Heart right ventricle (tissue), 16 donors: ENCODE measurements at regions of chr4 and their contacts with region 1.

Region 1: DNA sequence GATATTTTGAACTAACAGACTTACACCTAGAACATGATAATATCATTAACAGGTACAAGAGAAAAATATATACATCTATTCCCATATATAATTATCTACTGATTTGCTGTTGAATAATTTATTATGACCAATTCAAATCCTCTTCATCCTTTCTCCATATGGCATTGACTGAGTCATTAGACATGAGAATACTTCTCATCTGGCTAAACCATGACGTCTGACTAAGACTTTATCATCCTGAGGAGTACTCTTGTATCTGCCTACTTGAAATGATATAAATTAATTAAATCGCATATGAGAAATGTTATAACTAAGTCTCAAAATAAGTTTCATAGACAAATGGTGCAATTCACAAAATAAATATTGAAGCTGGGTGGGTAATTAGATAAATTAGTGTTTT is 67.4 kb downstream of the EMCN start:
- DNase-seq: no peak
- ATAC-seq: no peak
- H3K4me3 ChIP-seq: no peak overlapping the region
- H3K27ac ChIP-seq: no peak overlapping the region
- H3K4me1 ChIP-seq: no peaks in the 10 kb centered on the region
- H3K27me3 ChIP-seq: no peaks in the 10 kb centered on the region
- CTCF ChIP-seq: no peak

Region 2: DNA sequence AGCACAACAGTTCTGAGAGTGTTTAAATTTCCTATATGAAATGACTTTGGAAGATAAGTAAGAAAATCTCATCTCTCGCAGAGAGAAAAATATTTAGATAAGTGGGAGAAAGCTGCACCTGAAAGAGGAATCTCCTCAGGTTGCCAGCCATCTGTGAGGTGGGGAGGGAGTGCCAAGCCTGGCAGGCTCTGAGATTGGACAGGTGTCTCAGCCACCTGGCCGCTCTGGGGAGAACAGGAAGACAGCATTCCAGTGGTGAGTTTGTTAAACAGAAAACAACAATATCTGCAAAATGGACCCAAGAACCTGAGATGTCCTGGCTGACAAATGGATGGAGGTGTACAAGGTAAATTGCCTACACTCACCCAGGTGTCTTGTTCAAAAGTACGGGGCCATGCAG is 36.0 kb after region 1 on chr4:
- intact Hi-C with region 1: no loop called
- DNase-seq: no peak
- ATAC-seq: no peak
- H3K4me3 ChIP-seq: no peak overlapping the region
- H3K27ac ChIP-seq: no peak overlapping the region
- H3K4me1 ChIP-seq: peaks cover 0 to 11% (median 0%) of the 10 kb centered on the region in 9 donors
- H3K27me3 ChIP-seq: no peaks in the 10 kb centered on the region
- CTCF ChIP-seq: no peak

Region 3: GRCh38 chr4:100591161-100591876 is 140.9 kb after region 1 on chr4:
- intact Hi-C with region 1: loop called in 1 of 10 experiments (anchors 10 kb)
- DNase-seq: peak; percentile 32 to 82
- ATAC-seq: peak; percentile 70 to 97 (median 93)
- H3K4me3 ChIP-seq: peak overlapping the region in 1 of 10 donors; percentile 5
- H3K27ac ChIP-seq: peak overlapping the region in 2 of 10 donors; percentile 41 to 50
- H3K4me1 ChIP-seq: peaks cover 0 to 29% (median 11%) of the 10 kb centered on the region in 9 donors
- H3K27me3 ChIP-seq: no peaks in the 10 kb centered on the region
- CTCF ChIP-seq: no peak